ENCODE measurements at regions of chr14 and their contacts with region 1.

Region 1: GRCh38 chr14:100213956-100214774 is 24.8 kb upstream of the YY1 start:
- DNase-seq: peak; percentile 78 to 95 (median 92)
- ATAC-seq: peak; percentile 97
- H3K4me3 ChIP-seq: peak overlapping the region; percentile 70 to 92
- H3K4me3 Mint-ChIP-seq: peak overlapping the region; percentile 80
- H3K27ac ChIP-seq: peak overlapping the region; percentile 88 to 90
- H3K27ac Mint-ChIP-seq: peak overlapping the region; percentile 90
- H3K4me1 ChIP-seq: peaks cover 33% of the 10 kb centered on the region
- H3K4me1 Mint-ChIP-seq: peaks cover 29% of the 10 kb centered on the region
- H3K27me3 ChIP-seq: no peaks in the 10 kb centered on the region
- H3K27me3 Mint-ChIP-seq: no peaks in the 10 kb centered on the region
- CTCF ChIP-seq: no peak

Region 2: DNA sequence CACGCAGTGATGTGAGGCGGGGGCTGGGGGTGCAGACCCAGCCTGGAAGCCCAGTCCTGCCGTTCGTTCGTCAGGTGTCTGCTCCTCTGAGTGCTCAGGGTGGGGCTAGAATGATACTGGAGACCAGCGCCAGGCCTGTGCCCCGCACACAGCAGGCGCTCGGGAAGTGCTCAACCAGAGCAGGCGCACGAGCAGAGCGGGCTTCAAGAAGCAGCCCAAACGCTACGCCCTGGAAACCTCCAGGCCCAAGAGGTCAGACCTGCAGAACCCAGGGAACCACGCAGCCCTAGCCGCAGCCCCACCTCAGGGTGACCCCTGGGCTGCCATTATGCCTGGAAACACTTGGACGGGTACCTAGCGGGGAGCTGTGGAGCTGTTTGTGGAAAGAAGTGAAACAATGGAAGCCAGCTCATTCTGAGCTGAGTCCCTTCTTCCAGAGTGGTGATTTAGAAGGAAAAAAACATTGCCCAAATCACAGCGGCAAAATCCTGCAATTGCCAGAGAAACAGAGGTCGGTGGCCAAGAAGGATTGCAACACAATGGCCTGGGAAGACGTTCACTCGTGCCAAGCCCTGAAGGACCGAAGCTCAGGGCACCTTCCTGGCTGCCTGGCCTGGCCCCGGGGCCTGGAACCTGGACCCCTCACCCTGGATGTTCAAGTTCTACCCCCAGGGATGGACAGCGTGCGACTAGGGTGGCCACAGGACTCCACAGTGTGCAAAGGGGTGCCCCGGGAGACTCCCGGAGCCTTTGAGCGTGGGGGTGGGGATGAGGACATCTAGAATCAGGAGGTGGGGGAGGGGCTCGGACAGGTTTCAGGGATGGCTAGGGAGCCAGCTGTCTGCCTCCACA is 1306.7 kb after region 1 on chr14:
- CTCF ChIA-PET with region 1: no interaction called
- POLR2A ChIA-PET with region 1: no interaction called
- intact Hi-C with region 1: loop called in 1 of 2 experiments (anchors 10 kb)
- DNase-seq: no peak
- ATAC-seq: no peak
- H3K4me3 ChIP-seq: no peak overlapping the region
- H3K4me3 Mint-ChIP-seq: no peak overlapping the region
- H3K27ac ChIP-seq: no peak overlapping the region
- H3K27ac Mint-ChIP-seq: no peak overlapping the region
- H3K4me1 ChIP-seq: no peaks in the 10 kb centered on the region
- H3K4me1 Mint-ChIP-seq: no peaks in the 10 kb centered on the region
- H3K27me3 ChIP-seq: no peaks in the 10 kb centered on the region
- H3K27me3 Mint-ChIP-seq: peaks cover 3% of the 10 kb centered on the region
- CTCF ChIP-seq: no peak